Colonic mucosa (tissue), 4 donors: ENCODE measurements at regions of chr14 and their contacts with region 1.

Region 1: DNA sequence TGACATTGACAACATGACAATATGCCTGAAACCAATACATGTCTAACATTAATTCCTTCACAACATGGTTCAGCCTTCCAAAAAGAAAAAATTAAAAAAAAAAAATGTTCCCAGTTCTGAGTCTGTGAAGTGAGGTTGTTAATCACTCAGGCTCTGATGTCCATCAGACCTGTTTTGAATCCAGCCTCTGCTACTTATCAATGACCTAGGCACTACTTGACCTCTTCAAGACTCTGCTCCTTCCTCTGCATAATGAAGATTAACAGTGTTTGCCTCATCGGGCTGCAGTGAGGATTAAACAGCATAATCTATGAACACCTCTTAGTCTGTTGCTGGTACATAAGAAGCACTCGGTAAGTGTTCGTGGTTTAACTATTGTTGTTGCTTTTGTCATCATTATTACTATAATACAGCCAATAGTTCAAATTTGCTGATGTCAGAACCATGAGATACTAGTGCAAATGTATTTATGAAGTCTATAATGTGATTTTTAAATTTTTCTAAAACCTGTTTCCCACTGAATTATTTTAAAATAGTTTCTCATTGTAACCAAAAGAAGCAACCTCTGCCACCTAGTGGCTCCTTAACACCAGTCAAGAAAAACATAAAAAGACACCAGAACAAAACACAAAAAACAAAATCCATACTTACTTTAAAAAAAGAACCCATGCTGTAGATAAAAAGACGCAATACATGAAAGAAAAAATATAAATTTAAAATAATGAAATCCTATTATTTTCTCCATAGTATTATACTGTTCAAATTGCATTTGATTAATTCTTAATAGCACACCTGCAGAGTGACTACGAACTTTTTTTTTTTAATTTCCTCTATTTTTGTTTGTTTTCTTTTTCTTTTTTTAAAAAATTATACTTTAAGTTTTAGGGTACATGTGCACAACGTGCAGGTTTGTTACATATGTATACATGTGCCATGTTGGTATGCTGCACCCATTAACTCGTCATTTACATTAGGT is 20.3 kb upstream of the TMX1 start:
- DNase-seq: no peak
- H3K4me3 ChIP-seq: no peak overlapping the region
- H3K27ac ChIP-seq: no peak overlapping the region
- H3K4me1 ChIP-seq: no peaks in the 10 kb centered on the region
- H3K27me3 ChIP-seq: no peaks in the 10 kb centered on the region
- CTCF ChIP-seq: peak; percentile 52

Region 2: GRCh38 chr14:50417853-50418252 is 801.9 kb before region 1 on chr14:
- intact Hi-C with region 1: no loop called
- DNase-seq: no peak
- H3K4me3 ChIP-seq: no peak overlapping the region
- H3K27ac ChIP-seq: no peak overlapping the region
- H3K4me1 ChIP-seq: no peaks in the 10 kb centered on the region
- H3K27me3 ChIP-seq: no peaks in the 10 kb centered on the region
- CTCF ChIP-seq: no peak

Region 3: GRCh38 chr14:50954811-50955372 is 264.9 kb before region 1 on chr14:
- intact Hi-C with region 1: loop called (anchors 5 kb)
- DNase-seq: no peak
- H3K4me3 ChIP-seq: no peak overlapping the region
- H3K27ac ChIP-seq: no peak overlapping the region
- H3K4me1 ChIP-seq: no peaks in the 10 kb centered on the region
- H3K27me3 ChIP-seq: no peaks in the 10 kb centered on the region
- CTCF ChIP-seq: peak; percentile 49

Region 4: GRCh38 chr14:51094901-51095853 is 124.6 kb before region 1 on chr14 and contains the start of gene TRIM9:
- intact Hi-C with region 1: loop called (anchors 10 kb)
- DNase-seq: peak; percentile 94
- H3K4me3 ChIP-seq: peak within 1 kb of the TSS; percentile 63
- H3K27ac ChIP-seq: peak within 1 kb of the TSS; percentile 34
- H3K4me1 ChIP-seq: peaks cover 16% of the 10 kb centered on the region
- H3K27me3 ChIP-seq: peaks cover 17% of the 10 kb centered on the region
- CTCF ChIP-seq: no peak
- total RNA-seq, gene TRIM9: 0.49 to 0.66 TPM